CD4-positive, alpha-beta memory T cell (primary cell): ENCODE measurements at regions of chr9 and their contacts with region 1.

Region 1: GRCh38 chr9:97954550-97954989 is 16.6 kb upstream of the HEMGN start:
- DNase-seq: peak; percentile 60 to 65 (median 64)
- H3K4me3 ChIP-seq: no peak overlapping the region
- H3K4me3 Mint-ChIP-seq: no peak overlapping the region
- H3K27ac ChIP-seq: no peak overlapping the region
- H3K27ac Mint-ChIP-seq: no peak overlapping the region
- H3K4me1 ChIP-seq: peaks cover 6% of the 10 kb centered on the region
- H3K4me1 Mint-ChIP-seq: peaks cover 0 to 10% (median 2%) of the 10 kb centered on the region in 4 donors
- H3K27me3 ChIP-seq: no peaks in the 10 kb centered on the region
- H3K27me3 Mint-ChIP-seq: no peaks in the 10 kb centered on the region

Region 2: DNA sequence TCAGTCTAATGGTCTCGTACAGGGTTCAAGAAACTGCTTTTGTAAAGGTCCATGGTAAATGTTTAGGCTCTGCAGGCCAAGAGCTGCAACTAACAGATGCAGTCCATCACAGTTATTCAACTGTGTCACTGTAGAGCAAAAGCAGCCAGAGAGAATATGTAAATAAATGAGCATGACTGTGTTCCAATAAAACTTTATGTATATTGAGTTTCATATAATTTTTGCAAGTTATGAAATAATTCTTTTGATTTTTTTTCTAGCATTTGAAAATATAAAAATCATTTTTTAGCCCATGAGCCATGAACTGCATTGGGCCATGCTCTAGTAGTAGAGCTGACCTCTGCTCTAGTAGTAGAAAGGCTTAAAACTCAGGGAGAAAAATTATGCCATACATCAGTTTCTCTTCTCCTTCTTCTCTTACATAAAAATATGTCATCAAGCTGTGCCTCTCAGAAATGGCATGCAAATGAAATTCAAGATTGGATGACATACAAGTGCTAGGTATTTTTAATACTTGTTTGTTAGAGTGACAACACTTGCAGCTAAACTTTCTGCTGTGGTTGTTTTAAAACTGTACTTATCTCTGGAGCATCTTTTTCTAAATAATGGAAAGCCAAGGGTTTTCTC is 495.4 kb before region 1 on chr9:
- CTCF ChIA-PET with region 1: no interaction called
- POLR2A ChIA-PET with region 1: no interaction called
- intact Hi-C with region 1: no loop called
- DNase-seq: no peak
- H3K4me3 ChIP-seq: no peak overlapping the region
- H3K4me3 Mint-ChIP-seq: no peak overlapping the region
- H3K27ac ChIP-seq: no peak overlapping the region
- H3K27ac Mint-ChIP-seq: no peak overlapping the region
- H3K4me1 ChIP-seq: no peaks in the 10 kb centered on the region
- H3K4me1 Mint-ChIP-seq: no peaks in the 10 kb centered on the region
- H3K27me3 ChIP-seq: no peaks in the 10 kb centered on the region
- H3K27me3 Mint-ChIP-seq: no peaks in the 10 kb centered on the region

Region 3: GRCh38 chr9:97710356-97711222 is 244.0 kb before region 1 on chr9:
- CTCF ChIA-PET with region 1: interaction called, 3 read pairs
- POLR2A ChIA-PET with region 1: no interaction called
- intact Hi-C with region 1: loop called (anchors 1 kb)
- DNase-seq: peak; percentile 55 to 65 (median 60)
- H3K4me3 ChIP-seq: no peak overlapping the region
- H3K4me3 Mint-ChIP-seq: peak overlapping the region in 6 of 8 donors; percentile 13 to 55 (median 42)
- H3K27ac ChIP-seq: no peak overlapping the region
- H3K27ac Mint-ChIP-seq: peak overlapping the region in 3 of 7 donors; percentile 30 to 57 (median 45)
- H3K4me1 ChIP-seq: peaks cover 34% of the 10 kb centered on the region
- H3K4me1 Mint-ChIP-seq: peaks cover 23 to 44% (median 30%) of the 10 kb centered on the region in 4 donors
- H3K27me3 ChIP-seq: peaks cover 10% of the 10 kb centered on the region
- H3K27me3 Mint-ChIP-seq: peaks cover 4 to 7% of the 10 kb centered on the region in 2 donors

Region 4: DNA sequence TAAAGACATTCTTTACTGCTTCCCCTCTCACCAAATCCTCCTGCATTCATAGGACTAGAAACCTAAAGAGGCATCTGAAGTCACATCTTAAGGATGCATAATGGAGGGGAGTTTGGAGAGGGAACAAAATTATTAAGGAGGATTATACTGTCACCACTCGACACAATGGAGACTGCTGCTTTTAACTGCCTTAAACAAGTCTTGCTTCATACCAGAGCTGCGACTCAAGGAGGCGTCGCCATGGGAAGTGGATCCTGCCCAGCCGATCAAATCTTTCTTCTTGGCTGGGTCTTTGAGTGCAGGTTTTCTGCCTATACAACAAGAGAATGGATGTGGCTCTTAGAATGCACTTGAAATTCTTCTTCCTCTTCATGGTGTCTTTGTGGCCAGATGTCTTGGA is 168.2 kb before region 1 on chr9:
- CTCF ChIA-PET with region 1: no interaction called
- POLR2A ChIA-PET with region 1: no interaction called
- intact Hi-C with region 1: no loop called
- DNase-seq: no peak
- H3K4me3 ChIP-seq: no peak overlapping the region
- H3K4me3 Mint-ChIP-seq: no peak overlapping the region
- H3K27ac ChIP-seq: no peak overlapping the region
- H3K27ac Mint-ChIP-seq: no peak overlapping the region
- H3K4me1 ChIP-seq: no peaks in the 10 kb centered on the region
- H3K4me1 Mint-ChIP-seq: no peaks in the 10 kb centered on the region
- H3K27me3 ChIP-seq: no peaks in the 10 kb centered on the region
- H3K27me3 Mint-ChIP-seq: peaks cover 9 to 10% of the 10 kb centered on the region in 2 donors

Region 5: DNA sequence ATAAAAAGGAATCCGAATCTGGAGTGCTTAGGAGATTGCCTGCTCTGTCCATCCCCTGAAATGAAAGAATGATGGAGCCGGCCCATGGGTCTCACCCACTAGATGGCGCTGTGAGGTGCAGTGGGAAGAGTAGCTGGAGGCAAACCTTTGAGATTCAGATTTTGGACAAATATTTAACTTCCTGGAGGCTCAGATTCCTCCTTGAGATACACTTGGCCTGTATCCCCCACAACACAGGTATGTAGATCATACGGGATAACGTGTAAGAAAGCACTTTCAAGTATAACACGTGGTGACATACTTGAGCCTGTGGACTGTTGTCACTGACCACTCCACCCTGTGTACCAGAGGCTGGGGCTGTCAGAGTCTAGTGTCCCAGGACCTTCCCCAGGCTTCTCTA is 64.5 kb before region 1 on chr9:
- CTCF ChIA-PET with region 1: interaction called, 8 read pairs
- POLR2A ChIA-PET with region 1: no interaction called
- intact Hi-C with region 1: loop called (anchors 1 kb)
- DNase-seq: peak; percentile 52 to 61 (median 56)
- H3K4me3 ChIP-seq: no peak overlapping the region
- H3K4me3 Mint-ChIP-seq: no peak overlapping the region
- H3K27ac ChIP-seq: no peak overlapping the region
- H3K27ac Mint-ChIP-seq: peak overlapping the region in 3 of 7 donors; percentile 32 to 63 (median 58)
- H3K4me1 ChIP-seq: peaks cover 9% of the 10 kb centered on the region
- H3K4me1 Mint-ChIP-seq: peaks cover 2 to 13% (median 5%) of the 10 kb centered on the region in 4 donors
- H3K27me3 ChIP-seq: no peaks in the 10 kb centered on the region
- H3K27me3 Mint-ChIP-seq: no peaks in the 10 kb centered on the region

Region 6: GRCh38 chr9:97930972-97931371 is 23.6 kb before region 1 on chr9:
- CTCF ChIA-PET with region 1: interaction called, 256 read pairs
- POLR2A ChIA-PET with region 1: interaction called, 3 read pairs
- intact Hi-C with region 1: no loop called
- DNase-seq: peak in 1 of 5 donors; percentile 21
- H3K4me3 ChIP-seq: no peak overlapping the region
- H3K4me3 Mint-ChIP-seq: peak overlapping the region; percentile 67 to 86 (median 80)
- H3K27ac ChIP-seq: peak overlapping the region; percentile 21
- H3K27ac Mint-ChIP-seq: peak overlapping the region; percentile 71 to 94 (median 90)
- H3K4me1 ChIP-seq: peaks cover 41% of the 10 kb centered on the region
- H3K4me1 Mint-ChIP-seq: peaks cover 25 to 52% (median 37%) of the 10 kb centered on the region in 4 donors
- H3K27me3 ChIP-seq: no peaks in the 10 kb centered on the region
- H3K27me3 Mint-ChIP-seq: no peaks in the 10 kb centered on the region

Region 7: GRCh38 chr9:98034593-98035546 is 80.3 kb after region 1 on chr9:
- CTCF ChIA-PET with region 1: interaction called, 10 read pairs
- POLR2A ChIA-PET with region 1: no interaction called
- intact Hi-C with region 1: loop called (anchors 1 kb)
- DNase-seq: peak; percentile 80 to 88 (median 84)
- H3K4me3 ChIP-seq: no peak overlapping the region
- H3K4me3 Mint-ChIP-seq: peak overlapping the region in 3 of 8 donors; percentile 32 to 64 (median 38)
- H3K27ac ChIP-seq: no peak overlapping the region
- H3K27ac Mint-ChIP-seq: peak overlapping the region in 5 of 7 donors; percentile 28 to 64 (median 61)
- H3K4me1 ChIP-seq: peaks cover 6% of the 10 kb centered on the region
- H3K4me1 Mint-ChIP-seq: peaks cover 6 to 9% (median 6%) of the 10 kb centered on the region in 4 donors
- H3K27me3 ChIP-seq: no peaks in the 10 kb centered on the region
- H3K27me3 Mint-ChIP-seq: peaks cover 1 to 4% of the 10 kb centered on the region in 2 donors

Region 8: GRCh38 chr9:98263482-98264357 is 309.1 kb after region 1 on chr9:
- CTCF ChIA-PET with region 1: interaction called, 5 read pairs
- POLR2A ChIA-PET with region 1: no interaction called
- intact Hi-C with region 1: loop called (anchors 1 kb)
- DNase-seq: peak; percentile 78 to 84 (median 80)
- H3K4me3 ChIP-seq: no peak overlapping the region
- H3K4me3 Mint-ChIP-seq: no peak overlapping the region
- H3K27ac ChIP-seq: no peak overlapping the region
- H3K27ac Mint-ChIP-seq: peak overlapping the region in 2 of 7 donors; percentile 31 to 63
- H3K4me1 ChIP-seq: no peaks in the 10 kb centered on the region
- H3K4me1 Mint-ChIP-seq: peaks cover 0 to 5% (median 3%) of the 10 kb centered on the region in 4 donors
- H3K27me3 ChIP-seq: no peaks in the 10 kb centered on the region
- H3K27me3 Mint-ChIP-seq: peaks cover 0 to 6% of the 10 kb centered on the region in 2 donors